ENCODE measurements at regions of chr20 and their contacts with region 1.

Region 1: GRCh38 chr20:22333885-22334545 is 250.4 kb downstream of the FOXA2 start:
- DNase-seq: peak in 1 of 2 donors; percentile 44
- H3K4me3 ChIP-seq: no peak overlapping the region
- H3K27ac ChIP-seq: no peak overlapping the region
- H3K4me1 ChIP-seq: no peaks in the 10 kb centered on the region
- H3K27me3 ChIP-seq: peaks cover 0 to 42% of the 10 kb centered on the region in 2 donors
- CTCF ChIP-seq: peak; percentile 56 to 72

Region 2: DNA sequence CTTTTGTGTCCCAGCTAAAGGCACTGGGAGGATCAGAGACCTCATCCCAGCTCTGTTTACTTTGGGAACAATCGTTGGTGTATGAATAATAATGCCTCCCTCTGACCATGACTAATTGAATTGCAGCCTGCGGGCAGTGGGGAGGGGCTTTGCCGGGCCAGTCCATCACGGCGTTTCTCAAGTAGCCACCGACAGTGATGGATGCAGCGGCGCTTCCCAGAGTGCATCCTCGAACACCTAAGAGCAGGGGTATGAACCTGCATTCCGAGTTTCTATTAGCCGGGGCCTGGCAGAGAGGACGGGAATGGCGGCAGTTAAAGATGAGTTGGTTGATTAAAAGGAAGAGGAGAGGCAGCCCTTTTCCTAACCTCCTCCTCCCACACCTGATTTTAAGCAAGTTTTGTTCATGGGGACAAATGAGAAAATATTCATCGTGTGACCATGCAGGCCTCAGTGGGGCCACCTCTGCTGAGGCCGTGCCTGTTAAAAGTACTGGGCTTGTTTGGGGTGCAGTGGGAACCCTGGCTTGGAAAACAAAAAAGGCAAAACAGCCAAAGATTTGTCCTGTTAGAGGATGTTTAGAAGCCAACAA is 96.2 kb after region 1 on chr20:
- intact Hi-C with region 1: no loop called
- DNase-seq: no peak
- H3K4me3 ChIP-seq: no peak overlapping the region
- H3K27ac ChIP-seq: no peak overlapping the region
- H3K4me1 ChIP-seq: no peaks in the 10 kb centered on the region
- H3K27me3 ChIP-seq: peaks cover 0 to 11% of the 10 kb centered on the region in 2 donors
- CTCF ChIP-seq: no peak

Region 3: GRCh38 chr20:22684072-22684762 is 350.2 kb after region 1 on chr20:
- intact Hi-C with region 1: loop called (anchors 5 kb)
- DNase-seq: peak; percentile 69 to 77
- H3K4me3 ChIP-seq: no peak overlapping the region
- H3K27ac ChIP-seq: no peak overlapping the region
- H3K4me1 ChIP-seq: no peaks in the 10 kb centered on the region
- H3K27me3 ChIP-seq: peaks cover 0 to 14% of the 10 kb centered on the region in 2 donors
- CTCF ChIP-seq: peak; percentile 84 to 90

Measured in tibial artery (tissue), 4 donors.